ENCODE measurements at regions of chr7 and their contacts with region 1.

Region 1: DNA sequence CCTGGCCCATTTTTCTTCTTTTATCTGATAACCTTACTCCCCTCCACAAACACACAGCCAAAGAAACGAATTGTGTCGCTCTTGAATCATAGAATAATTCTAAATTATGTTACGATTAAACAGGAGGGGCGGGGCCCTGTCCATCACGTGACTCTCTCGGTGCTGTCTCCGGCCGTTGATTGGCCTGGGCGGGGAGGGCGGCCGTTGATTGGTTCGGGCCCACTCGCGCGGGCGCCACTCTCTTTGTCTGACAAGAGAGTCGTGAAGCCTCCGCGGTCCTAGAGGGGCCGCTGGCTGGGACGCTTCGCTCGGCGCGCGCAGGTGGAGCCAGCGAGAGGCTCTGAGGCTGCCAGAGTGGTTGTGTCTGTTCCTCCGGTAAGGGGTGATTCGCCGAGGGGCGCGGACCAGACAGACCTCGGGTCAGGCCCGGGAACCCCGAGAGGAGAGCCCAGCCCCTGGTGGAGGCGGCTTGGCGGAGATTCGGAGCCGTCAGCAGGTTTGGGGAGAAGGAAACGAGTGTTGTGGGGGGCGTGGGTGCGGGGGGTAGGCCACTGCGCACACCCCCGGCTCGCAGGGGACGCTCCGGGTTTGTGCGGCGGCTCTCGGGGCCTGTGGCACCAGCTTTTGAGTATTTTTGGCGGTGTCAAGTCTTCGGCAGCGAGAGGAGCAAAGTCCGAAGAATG is at the start of gene ZNF789:
- DNase-seq: peak; percentile 90
- ATAC-seq: peak; percentile 97
- H3K4me3 Mint-ChIP-seq: peak within 1 kb of the TSS; percentile 98
- H3K27ac Mint-ChIP-seq: peak within 1 kb of the TSS; percentile 93
- H3K4me1 Mint-ChIP-seq: peaks cover 25% of the 10 kb centered on the region
- H3K27me3 Mint-ChIP-seq: no peaks in the 10 kb centered on the region
- CTCF ChIP-seq: no peak
- total RNA-seq, gene ZNF789: 24.5 and 38.3 TPM in 2 replicates

Region 2: GRCh38 chr7:99374103-99375064 is 98.3 kb before region 1 on chr7 and contains the start of gene ARPC1B:
- CTCF ChIA-PET with region 1: no interaction called
- POLR2A ChIA-PET with region 1: interaction called, 8 read pairs
- intact Hi-C with region 1: loop called (anchors 2 kb)
- DNase-seq: peak; percentile 78
- ATAC-seq: peak; percentile 74
- H3K4me3 Mint-ChIP-seq: peak within 1 kb of the TSS; percentile 83
- H3K27ac Mint-ChIP-seq: peak within 1 kb of the TSS; percentile 79
- H3K4me1 Mint-ChIP-seq: peaks cover 33% of the 10 kb centered on the region
- H3K27me3 Mint-ChIP-seq: no peaks in the 10 kb centered on the region
- CTCF ChIP-seq: no peak
- total RNA-seq, gene ARPC1B: 300 and 312 TPM in 2 replicates

Region 3: GRCh38 chr7:99551767-99552463 is 79.2 kb after region 1 on chr7 and contains the start of gene FAM200A:
- CTCF ChIA-PET with region 1: no interaction called
- POLR2A ChIA-PET with region 1: interaction called, 9 read pairs
- intact Hi-C with region 1: loop called (anchors 1 kb)
- DNase-seq: peak; percentile 78
- ATAC-seq: peak; percentile 98
- H3K4me3 Mint-ChIP-seq: peak within 1 kb of the TSS; percentile 91
- H3K27ac Mint-ChIP-seq: peak within 1 kb of the TSS; percentile 87
- H3K4me1 Mint-ChIP-seq: peaks cover 33% of the 10 kb centered on the region
- H3K27me3 Mint-ChIP-seq: no peaks in the 10 kb centered on the region
- CTCF ChIP-seq: no peak
- total RNA-seq, gene FAM200A: 9.2 and 9.3 TPM in 2 replicates

Region 4: DNA sequence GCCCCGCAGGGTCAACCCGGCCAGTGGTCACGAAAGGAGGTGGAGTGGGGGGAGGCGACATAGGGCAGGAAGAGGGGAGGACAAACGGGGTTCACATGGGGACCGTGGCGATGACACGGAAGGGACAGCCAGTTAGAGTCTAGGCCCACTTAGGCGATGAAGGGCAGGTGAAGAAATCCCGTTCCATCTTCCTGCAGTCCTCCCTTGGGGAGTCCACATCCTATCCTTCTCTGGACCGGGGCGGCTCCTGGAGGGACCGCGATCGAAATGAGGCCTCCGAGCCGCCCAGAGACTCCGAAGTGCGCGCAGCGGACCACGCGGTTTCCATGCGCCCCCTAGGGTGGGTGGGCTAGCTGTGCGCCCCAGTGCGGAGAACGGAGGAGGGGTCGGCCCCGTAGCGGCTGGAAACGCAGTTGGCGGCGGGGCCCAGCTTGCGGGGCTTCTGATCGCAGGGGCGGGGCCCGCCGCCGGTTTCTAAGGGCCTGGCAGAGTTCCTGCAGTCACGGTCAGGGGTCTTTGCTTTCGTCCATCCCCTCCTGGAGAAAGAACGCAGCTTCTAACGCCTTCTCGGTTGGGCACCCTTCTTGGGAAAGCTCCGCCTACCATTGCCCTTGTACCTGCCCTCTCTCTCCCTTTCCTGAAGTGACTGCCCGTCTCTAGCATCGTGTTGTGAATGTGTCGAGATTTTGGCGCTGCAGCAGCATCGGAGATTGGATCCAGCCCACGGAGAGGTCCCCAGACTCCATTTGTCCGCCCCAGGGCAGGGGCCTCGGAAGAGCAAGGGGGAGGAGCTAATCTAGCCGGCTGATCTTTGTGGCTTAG is 107.5 kb after region 1 on chr7:
- CTCF ChIA-PET with region 1: no interaction called
- POLR2A ChIA-PET with region 1: interaction called, 20 read pairs
- intact Hi-C with region 1: no loop called
- DNase-seq: peak; percentile 42
- ATAC-seq: peak; percentile 79
- H3K4me3 Mint-ChIP-seq: peak overlapping the region; percentile 90
- H3K27ac Mint-ChIP-seq: peak overlapping the region; percentile 50
- H3K4me1 Mint-ChIP-seq: peaks cover 33% of the 10 kb centered on the region
- H3K27me3 Mint-ChIP-seq: no peaks in the 10 kb centered on the region
- CTCF ChIP-seq: no peak

Region 5: GRCh38 chr7:99607548-99607947 is 134.8 kb after region 1 on chr7:
- CTCF ChIA-PET with region 1: no interaction called
- POLR2A ChIA-PET with region 1: no interaction called
- intact Hi-C with region 1: no loop called
- DNase-seq: no peak
- ATAC-seq: no peak
- H3K4me3 Mint-ChIP-seq: no peak overlapping the region
- H3K27ac Mint-ChIP-seq: no peak overlapping the region
- H3K4me1 Mint-ChIP-seq: no peaks in the 10 kb centered on the region
- H3K27me3 Mint-ChIP-seq: no peaks in the 10 kb centered on the region
- CTCF ChIP-seq: no peak

Region 6: DNA sequence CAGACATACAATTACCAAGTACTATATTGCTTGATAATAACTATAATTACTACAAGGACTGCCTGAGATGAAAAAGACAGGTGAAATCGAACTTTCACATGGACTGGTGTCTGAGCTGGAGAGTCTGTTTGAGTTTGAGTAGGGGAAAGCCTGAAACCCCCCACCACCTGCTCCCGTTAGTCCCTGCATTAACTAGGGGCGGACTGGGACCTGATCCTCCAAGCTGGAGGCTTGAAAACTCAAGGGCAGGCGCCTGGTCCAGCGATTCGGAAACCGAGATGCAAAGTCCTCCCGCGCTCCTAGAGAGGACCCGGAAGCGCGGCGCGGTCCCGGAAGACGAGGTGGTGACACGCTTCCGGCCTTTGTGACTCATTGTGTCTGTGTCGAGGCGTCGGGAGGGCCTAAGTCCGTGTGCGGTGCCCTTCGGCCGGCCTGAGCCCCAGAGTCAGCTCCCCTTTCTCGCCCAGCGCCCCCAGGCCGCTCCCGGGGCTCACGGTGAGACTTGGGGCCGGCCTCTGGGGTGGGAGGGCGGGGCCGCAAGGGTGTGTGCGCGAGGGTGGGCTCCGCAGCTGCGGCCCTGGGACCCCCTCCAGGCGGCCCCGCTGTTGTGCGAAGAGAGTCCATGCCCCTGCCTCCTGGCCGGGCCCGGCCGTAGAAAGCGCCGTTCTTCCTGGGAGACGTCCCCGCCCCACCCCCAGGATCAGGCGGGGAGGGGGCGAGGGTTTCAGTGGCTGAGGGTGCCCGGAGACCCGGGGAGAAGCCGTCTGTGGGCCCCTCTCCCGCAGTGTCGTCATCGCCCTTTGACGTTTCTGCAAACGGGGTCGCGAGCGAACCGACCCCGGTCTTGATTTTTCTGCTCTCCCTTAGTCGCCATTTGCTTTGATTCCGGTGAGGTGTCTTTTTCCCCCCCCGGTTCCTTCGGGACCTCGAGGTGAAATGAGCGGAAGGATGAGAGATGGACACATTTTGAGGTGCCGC is 542.8 kb after region 1 on chr7 and contains the start of gene ZKSCAN1:
- CTCF ChIA-PET with region 1: interaction called, 3 read pairs
- POLR2A ChIA-PET with region 1: no interaction called
- intact Hi-C with region 1: loop called (anchors 1 kb)
- DNase-seq: peak; percentile 76
- ATAC-seq: peak; percentile 97
- H3K4me3 Mint-ChIP-seq: peak within 1 kb of the TSS; percentile 90
- H3K27ac Mint-ChIP-seq: peak within 1 kb of the TSS; percentile 84
- H3K4me1 Mint-ChIP-seq: peaks cover 34% of the 10 kb centered on the region
- H3K27me3 Mint-ChIP-seq: peaks cover 6% of the 10 kb centered on the region
- CTCF ChIP-seq: no peak
- total RNA-seq, gene ZKSCAN1: 59.0 and 70.6 TPM in 2 replicates